Left colon (tissue), 2 donors: ENCODE measurements at regions of chrX and their contacts with region 1.

Region 1: GRCh38 chrX:24081661-24082264 is 27.0 kb downstream of the EIF2S3 start:
- DNase-seq: peak; percentile 59 to 66
- ATAC-seq: peak; percentile 90

Region 2: DNA sequence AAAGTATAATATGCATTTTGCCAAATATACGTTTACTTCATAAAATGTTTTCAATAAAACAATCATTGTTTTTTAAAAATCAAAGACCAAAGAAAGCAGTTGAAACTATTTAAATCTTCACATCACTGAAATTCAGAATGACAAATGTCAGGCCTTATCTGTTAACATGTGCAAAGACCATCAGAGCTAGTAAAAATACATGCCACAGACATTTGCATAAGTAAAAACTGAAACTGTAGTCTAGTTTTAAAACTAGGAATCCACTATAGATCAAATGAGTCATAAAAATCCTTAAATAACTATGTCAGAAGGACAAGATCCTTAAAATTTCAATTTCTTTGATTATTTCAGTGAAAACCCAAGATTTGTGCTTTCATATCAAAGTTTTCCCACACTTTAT is 79.6 kb before region 1 on chrX:
- intact Hi-C with region 1: no loop called
- DNase-seq: no peak
- ATAC-seq: no peak

Region 3: DNA sequence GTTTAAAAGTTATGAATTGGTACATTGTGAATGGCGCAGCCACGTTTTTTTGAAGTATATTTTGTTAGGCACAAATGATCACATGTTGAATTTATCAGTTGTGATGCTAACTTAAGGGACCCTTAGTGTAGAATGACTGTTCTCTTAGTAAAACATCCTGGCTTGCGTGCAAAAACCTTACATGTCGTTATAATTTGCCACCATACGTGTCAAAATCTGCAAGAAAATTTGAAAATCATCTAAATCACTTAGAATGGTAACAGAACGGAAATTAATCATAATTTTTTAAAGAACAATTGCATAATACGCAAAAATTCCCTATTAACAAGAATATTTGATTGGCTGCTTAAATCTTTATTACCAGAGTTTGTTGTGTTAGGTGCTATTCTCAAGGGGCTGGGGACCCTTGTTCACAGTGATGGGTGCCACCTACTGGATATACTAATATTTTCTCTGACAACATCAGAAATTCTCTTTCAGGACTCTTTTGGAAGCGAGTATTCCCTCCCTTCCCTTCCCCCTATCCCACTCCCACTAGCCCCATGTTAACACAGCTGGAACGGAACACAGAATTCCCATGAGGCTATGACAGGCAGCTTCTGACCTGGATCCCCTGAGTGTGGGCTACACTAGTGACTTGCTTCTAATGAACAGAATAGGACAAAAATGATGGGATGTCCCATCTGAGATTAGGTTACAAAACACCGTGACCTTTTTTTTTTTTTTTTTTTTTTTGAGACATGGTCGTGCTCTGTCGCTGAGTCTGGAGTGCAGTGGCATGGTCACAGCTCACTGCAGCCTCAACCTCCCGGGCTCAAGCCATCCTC is 160.3 kb after region 1 on chrX:
- intact Hi-C with region 1: loop called in 1 of 2 experiments (anchors 5 kb)
- DNase-seq: no peak
- ATAC-seq: peak; percentile 49

Region 4: DNA sequence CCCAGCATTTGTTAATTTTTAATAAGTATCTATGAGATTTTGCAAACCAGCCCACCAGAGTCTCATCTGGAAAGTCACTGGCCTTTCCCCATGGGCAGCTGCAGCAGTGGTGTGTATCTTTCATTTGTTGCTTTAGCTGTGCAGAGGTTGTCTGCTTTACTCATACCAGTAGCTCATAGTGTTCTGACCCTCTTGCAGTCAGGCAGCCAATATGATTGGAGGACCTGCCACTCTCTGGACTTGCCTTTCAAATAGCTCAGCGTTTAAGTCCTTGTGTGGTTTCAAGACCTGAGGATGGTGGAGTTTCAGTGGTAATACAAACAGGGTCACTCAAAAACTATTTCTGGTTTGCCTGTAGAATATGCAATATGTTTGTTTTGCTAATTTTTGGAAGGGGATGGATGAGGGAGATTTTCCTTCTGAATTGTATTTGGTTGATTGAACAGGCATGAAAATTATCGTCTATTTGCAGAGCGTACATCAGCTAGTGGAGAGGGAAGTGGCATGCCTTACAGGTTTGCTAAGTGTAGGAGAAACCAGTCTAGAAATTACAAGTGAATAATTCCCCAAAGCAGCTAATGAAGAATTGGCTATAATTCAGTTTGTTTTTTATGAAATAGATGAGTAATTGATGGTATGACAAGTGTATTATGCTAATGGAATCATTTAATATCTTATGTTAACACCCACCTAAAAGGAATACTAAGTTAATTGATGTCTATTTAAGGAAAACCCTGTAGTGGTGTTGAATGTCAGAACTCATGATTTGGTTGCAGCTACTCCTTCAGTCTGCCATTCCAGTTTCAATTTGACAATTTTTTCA is 620.8 kb after region 1 on chrX:
- intact Hi-C with region 1: no loop called
- DNase-seq: no peak
- ATAC-seq: no peak